Endothelial cell of umbilical vein (primary cell): ENCODE measurements at regions of chr17 and their contacts with region 1.

Region 1: GRCh38 chr17:47698749-47699535 is 5.0 kb downstream of the TBKBP1 start:
- DNase-seq: peak; percentile 39
- H3K4me3 ChIP-seq: no peak overlapping the region
- H3K27ac ChIP-seq: no peak overlapping the region
- H3K4me1 ChIP-seq: peaks cover 15% of the 10 kb centered on the region
- H3K27me3 ChIP-seq: no peaks in the 10 kb centered on the region
- CTCF ChIP-seq: peak; percentile 60 to 91
- POLR2A ChIP-seq: no peak

Region 2: DNA sequence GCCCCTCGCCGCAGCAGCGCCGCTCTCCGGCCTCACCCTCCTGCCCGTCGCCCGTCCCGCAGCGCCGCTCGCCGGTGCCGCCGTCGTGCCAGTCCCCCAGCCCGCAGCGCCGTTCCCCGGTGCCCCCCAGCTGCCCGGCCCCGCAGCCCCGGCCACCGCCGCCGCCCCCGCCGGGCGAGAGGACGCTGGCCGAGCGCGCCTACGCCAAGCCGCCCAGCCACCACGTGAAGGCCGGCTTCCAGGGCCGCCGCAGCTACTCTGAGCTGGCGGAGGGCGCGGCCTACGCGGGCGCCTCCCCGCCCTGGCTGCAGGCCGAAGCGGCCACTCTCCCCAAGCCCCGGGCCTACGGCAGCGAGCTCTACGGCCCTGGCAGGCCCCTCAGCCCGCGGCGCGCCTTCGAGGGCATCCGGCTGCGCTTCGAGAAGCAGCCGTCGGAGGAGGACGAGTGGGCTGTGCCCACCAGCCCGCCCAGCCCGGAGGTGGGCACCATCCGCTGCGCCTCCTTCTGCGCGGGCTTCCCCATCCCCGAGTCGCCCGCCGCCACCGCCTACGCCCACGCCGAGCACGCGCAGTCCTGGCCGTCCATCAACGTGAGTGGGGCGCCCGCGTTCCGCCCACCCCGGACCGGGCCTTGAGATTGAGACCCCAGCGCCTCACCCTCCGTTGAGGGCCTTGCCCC is 10.1 kb after region 1 on chr17:
- CTCF ChIA-PET with region 1: interaction called, 22 read pairs
- POLR2A ChIA-PET with region 1: interaction called, 3 read pairs
- dilution Hi-C with region 1: no loop called
- intact Hi-C with region 1: no loop called
- DNase-seq: no peak
- H3K4me3 ChIP-seq: no peak overlapping the region
- H3K27ac ChIP-seq: no peak overlapping the region
- H3K4me1 ChIP-seq: no peaks in the 10 kb centered on the region
- H3K27me3 ChIP-seq: no peaks in the 10 kb centered on the region
- CTCF ChIP-seq: no peak
- POLR2A ChIP-seq: no peak

Region 3: DNA sequence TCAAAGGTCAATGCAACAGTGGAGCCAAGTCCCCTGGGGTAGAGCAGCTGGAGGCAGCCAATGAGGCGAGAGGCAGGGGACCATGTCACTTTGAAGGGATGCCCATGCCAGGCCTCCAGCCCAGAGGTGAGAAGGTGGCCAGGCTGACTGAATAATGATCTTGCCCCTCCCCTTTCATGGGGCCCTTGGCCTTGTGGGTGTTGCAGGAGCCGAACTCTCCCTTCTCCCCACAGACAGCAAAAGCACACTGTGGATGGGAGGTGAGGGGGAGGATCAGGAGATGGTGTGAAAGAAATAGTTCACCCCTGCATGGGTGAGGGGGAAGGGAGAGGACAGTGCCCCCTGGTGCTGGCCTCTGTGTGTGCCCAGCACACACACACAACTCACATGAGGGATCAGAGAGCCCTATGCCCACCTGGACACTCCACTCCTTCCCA is 18.3 kb after region 1 on chr17:
- CTCF ChIA-PET with region 1: interaction called, 14 read pairs
- POLR2A ChIA-PET with region 1: interaction called, 3 read pairs
- dilution Hi-C with region 1: no loop called
- intact Hi-C with region 1: no loop called
- DNase-seq: no peak
- H3K4me3 ChIP-seq: no peak overlapping the region
- H3K27ac ChIP-seq: no peak overlapping the region
- H3K4me1 ChIP-seq: no peaks in the 10 kb centered on the region
- H3K27me3 ChIP-seq: peaks cover 35 to 39% of the 10 kb centered on the region in 2 experiments
- CTCF ChIP-seq: peak; percentile 30 to 51
- POLR2A ChIP-seq: no peak

Region 4: DNA sequence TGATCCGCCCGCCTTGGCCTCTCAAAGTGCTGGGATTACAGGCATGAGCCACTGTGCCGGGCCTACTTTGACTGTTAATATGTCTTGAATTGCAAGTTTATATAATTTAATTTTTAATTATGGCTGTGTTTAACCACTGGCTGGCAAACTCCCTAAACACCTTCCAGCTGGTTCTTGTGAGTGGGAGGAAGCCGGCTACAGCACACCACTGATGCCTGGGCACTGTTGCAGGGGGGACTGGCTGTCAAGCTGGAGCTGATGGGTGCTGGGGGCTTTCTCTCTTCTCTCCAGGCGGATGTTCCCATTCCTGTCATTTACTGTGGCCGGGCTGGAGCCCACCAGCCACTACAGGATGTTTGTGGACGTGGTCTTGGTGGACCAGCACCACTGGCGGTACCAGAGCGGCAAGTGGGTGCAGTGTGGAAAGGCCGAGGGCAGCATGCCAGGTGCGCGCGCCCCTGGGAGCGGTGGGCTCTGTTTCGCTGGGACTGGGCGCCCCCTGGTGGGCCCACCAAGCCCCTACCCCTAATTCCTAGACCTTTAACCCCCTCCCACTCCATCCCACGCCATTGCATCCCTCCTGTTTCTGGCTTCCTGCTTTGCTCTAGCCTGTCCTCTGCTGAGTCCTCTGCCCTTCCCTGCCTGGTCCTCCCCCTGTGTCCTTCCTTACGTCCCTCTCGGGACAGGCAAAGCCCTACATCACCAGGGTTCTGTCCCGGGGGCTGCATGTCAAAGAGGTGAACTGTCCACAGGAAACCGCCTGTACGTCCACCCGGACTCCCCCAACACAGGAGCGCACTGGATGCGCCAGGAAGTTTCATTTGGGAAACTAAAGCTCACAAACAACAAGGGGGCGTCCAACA is 43.6 kb after region 1 on chr17:
- CTCF ChIA-PET with region 1: interaction called, 8 read pairs
- POLR2A ChIA-PET with region 1: no interaction called
- dilution Hi-C with region 1: no loop called
- intact Hi-C with region 1: loop called (anchors 1 kb)
- DNase-seq: no peak
- H3K4me3 ChIP-seq: no peak overlapping the region
- H3K27ac ChIP-seq: no peak overlapping the region
- H3K4me1 ChIP-seq: no peaks in the 10 kb centered on the region
- H3K27me3 ChIP-seq: peaks cover 0 to 7% of the 10 kb centered on the region in 2 experiments
- CTCF ChIP-seq: peak; percentile 35 to 61
- POLR2A ChIP-seq: no peak

Region 5: DNA sequence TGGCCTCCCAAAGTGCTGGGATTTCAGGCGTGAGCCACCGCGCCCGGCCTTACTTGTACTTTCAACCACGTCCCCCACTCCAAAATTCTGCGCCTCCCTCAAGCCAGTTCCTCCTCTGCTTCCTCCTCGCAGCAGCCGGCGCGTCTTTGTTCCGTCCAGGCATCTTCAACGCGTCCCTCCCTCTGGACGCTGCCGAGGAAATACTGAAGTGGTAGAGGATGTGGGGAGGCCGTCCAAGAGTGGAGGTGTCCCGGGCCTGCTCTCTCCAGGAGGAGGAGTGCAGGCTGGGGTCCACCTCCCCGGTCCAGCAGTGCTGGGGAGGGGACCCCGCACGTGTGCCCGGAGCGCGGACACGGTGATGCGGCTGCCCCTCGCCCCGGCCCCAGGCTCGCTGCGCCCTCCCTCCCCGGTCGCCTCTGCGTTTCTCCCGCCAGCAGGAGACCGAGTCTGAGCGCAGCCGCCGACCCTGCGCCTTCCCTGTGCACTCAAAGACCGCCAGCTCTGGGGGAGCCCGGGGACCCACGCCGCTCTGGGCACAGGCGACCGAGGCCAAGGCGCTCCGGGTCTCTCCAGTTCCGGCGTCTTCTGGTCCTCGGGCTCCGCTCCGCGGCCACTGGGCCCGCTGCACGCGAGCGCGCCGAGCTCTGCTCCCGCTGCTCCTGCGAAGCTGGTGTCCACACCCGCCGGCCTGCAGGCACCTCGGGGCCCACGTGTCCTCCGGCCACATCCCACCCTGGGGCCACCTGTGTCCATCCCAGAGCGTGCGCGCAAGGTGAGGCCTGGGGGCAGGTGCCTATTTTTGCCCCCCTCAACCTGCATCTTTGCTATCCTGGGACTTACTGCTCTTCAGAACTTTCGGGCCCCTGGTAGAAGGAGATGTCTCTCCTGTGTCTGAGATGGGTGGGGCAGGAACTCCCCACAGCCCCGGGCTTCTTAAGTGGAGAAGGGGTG is 90.9 kb after region 1 on chr17:
- CTCF ChIA-PET with region 1: interaction called, 11 read pairs
- POLR2A ChIA-PET with region 1: no interaction called
- dilution Hi-C with region 1: no loop called
- intact Hi-C with region 1: no loop called
- DNase-seq: peak; percentile 35
- H3K4me3 ChIP-seq: peak overlapping the region in 2 of 3 experiments; percentile 6 to 12
- H3K27ac ChIP-seq: no peak overlapping the region
- H3K4me1 ChIP-seq: peaks cover 5% of the 10 kb centered on the region
- H3K27me3 ChIP-seq: peaks cover 25 to 58% of the 10 kb centered on the region in 2 experiments
- CTCF ChIP-seq: peak; percentile 27 to 69
- POLR2A ChIP-seq: no peak

Region 6: GRCh38 chr17:47802341-47803022 is 103.5 kb after region 1 on chr17:
- CTCF ChIA-PET with region 1: interaction called, 5 read pairs
- POLR2A ChIA-PET with region 1: no interaction called
- dilution Hi-C with region 1: no loop called
- intact Hi-C with region 1: loop called (anchors 1 kb)
- DNase-seq: peak; percentile 36
- H3K4me3 ChIP-seq: no peak overlapping the region
- H3K27ac ChIP-seq: no peak overlapping the region
- H3K4me1 ChIP-seq: no peaks in the 10 kb centered on the region
- H3K27me3 ChIP-seq: peaks cover 0 to 2% of the 10 kb centered on the region in 2 experiments
- CTCF ChIP-seq: peak; percentile 47 to 71
- POLR2A ChIP-seq: no peak